Ascending aorta (tissue), 2 donors: ENCODE measurements at regions of chr5 and their contacts with region 1.

Region 1: DNA sequence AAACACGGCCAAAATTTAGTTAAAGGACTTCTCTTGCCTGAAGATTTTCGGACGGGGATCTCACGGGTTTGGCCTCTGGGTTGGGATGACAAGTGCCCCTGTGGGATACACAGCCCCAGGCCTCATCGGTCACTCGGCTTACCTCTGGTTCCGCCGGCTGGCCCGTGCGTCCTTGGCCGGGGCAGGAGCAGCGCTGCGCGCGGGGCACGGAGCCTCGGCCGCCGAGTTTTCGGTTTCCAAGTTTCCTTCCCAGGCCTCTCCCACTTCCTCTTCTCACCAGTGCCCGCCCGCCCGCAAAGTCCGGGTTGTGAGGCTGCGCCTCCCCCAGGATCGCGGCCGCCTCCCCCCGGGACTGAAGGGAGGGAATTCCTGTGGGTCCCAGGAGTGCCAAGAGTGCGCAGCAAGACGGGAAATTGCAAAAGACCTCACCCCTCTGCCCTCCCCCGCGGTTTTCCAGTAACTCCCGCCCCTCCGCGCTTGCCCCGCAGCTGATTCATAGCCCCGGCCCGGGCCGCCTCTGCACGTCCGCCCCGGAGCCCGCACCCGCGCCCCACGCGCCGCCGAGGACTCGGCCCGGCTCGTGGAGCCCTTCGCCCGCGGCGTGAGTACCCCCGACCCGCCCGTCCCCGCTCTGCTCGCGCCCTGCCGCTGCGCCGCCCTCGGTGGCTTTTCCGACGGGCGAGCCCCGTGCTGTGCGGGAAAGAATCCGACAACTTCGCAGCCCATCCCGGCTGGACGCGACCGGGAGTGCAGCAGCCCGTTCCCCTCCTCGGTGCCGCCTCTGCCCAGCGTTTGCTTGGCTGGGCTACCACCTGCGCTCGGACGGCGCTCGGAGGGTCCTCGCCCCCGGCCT is at the start of gene OSMR:
- DNase-seq: peak; percentile 74 to 98
- H3K4me3 ChIP-seq: peak within 1 kb of the TSS; percentile 89 to 92
- H3K27ac ChIP-seq: peak within 1 kb of the TSS; percentile 97
- H3K4me1 ChIP-seq: peaks cover 0 to 13% of the 10 kb centered on the region in 2 donors
- H3K27me3 ChIP-seq: no peaks in the 10 kb centered on the region
- CTCF ChIP-seq: peak in 1 of 3 experiments; percentile 16
- total RNA-seq, gene OSMR: 52.4 TPM

Region 2: GRCh38 chr5:38467353-38468040 is 378.3 kb before region 1 on chr5:
- intact Hi-C with region 1: loop called (anchors 5 kb)
- DNase-seq: peak in 1 of 2 donors; percentile 91
- H3K4me3 ChIP-seq: peak overlapping the region in 1 of 2 donors; percentile 41
- H3K27ac ChIP-seq: peak overlapping the region; percentile 91 to 95
- H3K4me1 ChIP-seq: peaks cover 32 to 66% of the 10 kb centered on the region in 2 donors
- H3K27me3 ChIP-seq: no peaks in the 10 kb centered on the region
- CTCF ChIP-seq: no peak

Region 3: GRCh38 chr5:38556599-38557305 is 289.0 kb before region 1 on chr5 and contains the start of gene LIFR:
- intact Hi-C with region 1: loop called (anchors 2 kb)
- DNase-seq: peak in 1 of 2 donors; percentile 86
- H3K4me3 ChIP-seq: peak within 1 kb of the TSS; percentile 78 to 91
- H3K27ac ChIP-seq: peak within 1 kb of the TSS; percentile 91 to 99
- H3K4me1 ChIP-seq: peaks cover 0 to 9% of the 10 kb centered on the region in 2 donors
- H3K27me3 ChIP-seq: no peaks in the 10 kb centered on the region
- CTCF ChIP-seq: no peak
- total RNA-seq, gene LIFR: 116 TPM

Region 4: GRCh38 chr5:38598994-38599611 is 246.6 kb before region 1 on chr5:
- intact Hi-C with region 1: no loop called
- DNase-seq: no peak
- H3K4me3 ChIP-seq: no peak overlapping the region
- H3K27ac ChIP-seq: no peak overlapping the region
- H3K4me1 ChIP-seq: peaks cover 12 to 18% of the 10 kb centered on the region in 2 donors
- H3K27me3 ChIP-seq: no peaks in the 10 kb centered on the region
- CTCF ChIP-seq: no peak

Region 5: DNA sequence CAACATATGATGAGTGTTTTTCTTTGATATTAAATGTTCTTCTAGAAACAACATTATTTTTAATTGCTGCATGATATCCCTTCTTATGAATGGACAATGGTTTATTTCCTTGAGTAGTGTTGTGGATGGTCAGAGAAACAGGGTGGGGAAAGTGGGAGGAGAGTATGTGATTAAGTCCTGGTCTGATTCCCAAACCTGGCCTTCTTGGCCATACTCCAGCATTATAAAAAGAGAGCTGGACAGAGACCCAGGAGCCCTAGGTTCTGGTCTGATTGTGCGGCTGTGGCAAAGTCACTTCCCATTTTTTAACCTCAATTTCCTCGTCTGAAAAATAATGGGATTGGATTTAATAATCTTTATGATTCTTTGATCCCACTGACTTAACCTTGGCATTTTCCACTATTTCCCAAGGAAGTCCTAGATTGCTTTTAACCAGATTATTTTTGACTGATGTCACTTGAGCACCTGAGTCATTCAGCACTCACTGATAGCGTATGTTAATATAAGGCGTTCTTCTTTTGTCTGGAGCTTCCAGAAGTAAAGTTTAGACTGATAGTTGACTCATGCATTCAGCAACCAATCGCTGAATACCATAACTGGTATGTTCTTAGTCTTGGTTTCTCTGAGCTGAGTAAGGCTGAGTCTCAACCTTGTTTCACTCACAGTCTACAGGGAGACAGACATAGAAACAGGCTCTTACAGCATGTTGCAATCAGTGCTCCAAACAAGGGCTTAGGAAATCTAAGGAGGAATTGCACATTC is 26.2 kb after region 1 on chr5:
- intact Hi-C with region 1: loop called (anchors 1 kb)
- DNase-seq: no peak
- H3K4me3 ChIP-seq: no peak overlapping the region
- H3K27ac ChIP-seq: peak overlapping the region; percentile 48 to 54
- H3K4me1 ChIP-seq: peaks cover 4 to 10% of the 10 kb centered on the region in 2 donors
- H3K27me3 ChIP-seq: no peaks in the 10 kb centered on the region
- CTCF ChIP-seq: no peak

Region 6: DNA sequence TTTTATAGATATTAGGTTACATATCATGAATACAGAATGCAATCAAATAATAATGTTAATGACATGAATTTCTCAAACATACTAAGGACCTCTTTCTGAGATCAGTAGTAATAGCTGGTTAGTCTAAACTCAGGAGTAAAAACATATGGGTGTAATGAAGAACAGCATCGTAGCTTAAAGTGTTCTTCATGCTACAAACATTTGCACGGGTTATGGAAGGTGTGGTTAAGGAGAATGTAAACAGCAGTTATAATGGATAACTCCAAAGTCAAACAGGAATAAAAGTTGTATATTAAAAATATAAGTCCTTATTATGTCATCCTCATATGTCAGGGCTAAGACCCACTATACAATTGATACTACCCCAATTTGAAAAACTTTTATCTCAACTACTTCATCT is 115.9 kb after region 1 on chr5:
- intact Hi-C with region 1: no loop called
- DNase-seq: no peak
- H3K4me3 ChIP-seq: no peak overlapping the region
- H3K27ac ChIP-seq: no peak overlapping the region
- H3K4me1 ChIP-seq: no peaks in the 10 kb centered on the region
- H3K27me3 ChIP-seq: no peaks in the 10 kb centered on the region
- CTCF ChIP-seq: no peak

Region 7: DNA sequence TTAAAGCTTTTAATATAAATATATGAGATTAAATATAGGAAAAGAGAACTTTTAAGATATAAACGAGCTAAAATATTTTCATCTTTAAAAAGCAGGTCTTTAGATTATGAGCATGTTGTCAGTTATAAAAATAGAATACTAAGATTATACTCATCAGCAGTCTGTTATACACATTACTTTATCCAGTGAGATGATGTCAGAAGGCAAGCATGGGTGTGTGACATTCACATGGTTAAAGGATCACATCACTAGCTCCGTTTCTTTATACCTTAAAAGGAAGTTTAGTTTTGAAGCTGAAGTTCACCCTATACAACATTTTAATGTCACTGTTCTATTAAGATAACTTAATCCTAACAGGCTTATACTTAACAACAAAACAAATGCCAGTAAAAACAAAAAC is 168.8 kb after region 1 on chr5:
- intact Hi-C with region 1: loop called (anchors 5 kb)
- DNase-seq: no peak
- H3K4me3 ChIP-seq: no peak overlapping the region
- H3K27ac ChIP-seq: peak overlapping the region; percentile 87
- H3K4me1 ChIP-seq: peaks cover 0 to 21% of the 10 kb centered on the region in 2 donors
- H3K27me3 ChIP-seq: no peaks in the 10 kb centered on the region
- CTCF ChIP-seq: no peak

Region 8: DNA sequence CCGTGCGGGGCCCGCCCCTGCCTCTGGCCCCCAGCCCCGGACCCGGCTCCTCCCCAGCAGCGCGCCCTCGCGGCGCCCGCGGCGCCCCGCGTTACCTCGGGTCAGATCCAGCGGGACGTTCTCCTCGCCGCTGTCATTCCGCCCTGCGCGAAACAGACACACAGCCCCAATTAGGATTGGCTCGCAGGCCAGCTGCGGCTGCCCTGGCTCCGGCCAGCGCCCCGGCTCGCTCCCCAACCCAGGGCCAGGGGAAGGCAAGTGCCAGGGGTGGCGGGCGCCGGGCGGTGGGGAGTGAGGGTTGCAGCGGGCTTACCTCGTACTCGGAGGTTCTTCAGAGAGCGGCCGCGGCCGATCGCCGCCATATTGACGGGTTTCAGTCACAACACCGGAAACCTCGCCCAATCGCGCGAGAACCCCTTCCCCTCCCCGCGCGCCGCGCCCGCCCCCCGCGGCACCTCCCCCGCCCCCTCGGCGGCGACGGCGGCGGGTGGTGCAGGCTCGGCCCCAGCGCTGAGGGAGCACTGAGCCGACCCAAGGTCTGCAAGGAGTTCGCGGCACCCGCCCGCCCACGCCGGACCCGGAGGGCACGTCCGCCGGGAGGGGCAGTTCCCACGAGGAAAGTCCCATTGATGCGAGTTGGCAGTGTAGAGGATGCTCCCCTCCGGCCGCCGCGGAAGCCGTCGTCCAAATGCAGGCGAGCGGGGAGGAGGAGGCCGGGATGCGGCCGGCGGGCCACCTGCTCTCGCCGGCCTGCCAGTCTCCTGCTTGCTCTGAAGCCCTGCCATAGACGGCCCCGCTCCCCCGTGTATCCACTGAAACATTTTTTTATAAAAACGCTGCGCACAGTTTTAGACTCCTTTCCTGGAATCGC is 228.5 kb after region 1 on chr5 and contains the start of gene RICTOR:
- intact Hi-C with region 1: loop called (anchors 2 kb)
- DNase-seq: peak; percentile 54 to 93
- H3K4me3 ChIP-seq: peak within 1 kb of the TSS; percentile 89 to 90
- H3K27ac ChIP-seq: peak within 1 kb of the TSS; percentile 97 to 99
- H3K4me1 ChIP-seq: peaks cover 0 to 20% of the 10 kb centered on the region in 2 donors
- H3K27me3 ChIP-seq: no peaks in the 10 kb centered on the region
- CTCF ChIP-seq: no peak
- total RNA-seq, gene RICTOR: 12.1 TPM

Region 9: GRCh38 chr5:39411051-39411450 is 565.3 kb after region 1 on chr5:
- intact Hi-C with region 1: loop called (anchors 10 kb)
- DNase-seq: no peak
- H3K4me3 ChIP-seq: peak overlapping the region in 1 of 2 donors; percentile 20
- H3K27ac ChIP-seq: peak overlapping the region; percentile 59 to 84
- H3K4me1 ChIP-seq: peaks cover 6 to 34% of the 10 kb centered on the region in 2 donors
- H3K27me3 ChIP-seq: no peaks in the 10 kb centered on the region
- CTCF ChIP-seq: no peak